ENCODE measurements at regions of chr5 and their contacts with region 1.

Region 1: DNA sequence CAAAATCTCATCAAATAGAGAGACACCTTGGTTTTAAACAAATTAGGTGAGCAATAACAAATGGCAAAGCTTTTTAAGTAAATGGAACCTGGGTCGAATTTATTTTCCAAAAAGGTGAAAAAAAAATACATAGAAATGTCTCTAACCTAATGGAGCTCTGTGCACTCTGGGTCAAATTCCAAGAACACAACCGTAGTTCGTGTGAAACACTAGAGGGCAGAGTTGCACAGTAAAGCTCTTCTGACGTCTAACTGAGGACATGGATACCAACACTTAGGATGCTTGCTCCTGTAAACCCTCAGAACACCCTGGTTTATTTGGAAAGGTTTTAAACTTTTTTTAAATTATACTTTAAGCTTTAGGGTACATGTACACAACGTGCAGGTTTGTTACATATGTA is 18.9 kb downstream of the MARCHF11 start:
- DNase-seq: no peak
- H3K4me3 ChIP-seq: no peak overlapping the region; a peak in 1 of 4 replicates
- H3K27ac ChIP-seq: peak overlapping the region in 1 of 2 experiments; percentile 82; a peak in 1 of 4 replicates
- H3K4me1 ChIP-seq: peaks cover 0 to 6% of the 10 kb centered on the region in 2 experiments; a peak in 2 of 4 replicates
- H3K27me3 ChIP-seq: no peaks in the 10 kb centered on the region
- CTCF ChIP-seq: peak; percentile 78
- EP300 ChIP-seq: no peak
- RAD21 ChIP-seq: peak; percentile 91

Region 2: GRCh38 chr5:16178745-16179372 is 18.2 kb after region 1 on chr5:
- CTCF ChIA-PET with region 1: interaction called, 37 read pairs
- POLR2A ChIA-PET with region 1: no interaction called
- DNase-seq: peak; percentile 73
- H3K4me3 ChIP-seq: peak overlapping the region; percentile 48 to 56; a peak in 3 of 4 replicates
- H3K27ac ChIP-seq: peak overlapping the region in 1 of 2 experiments; percentile 96; a peak in 2 of 4 replicates
- H3K4me1 ChIP-seq: peaks cover 0 to 22% of the 10 kb centered on the region in 2 experiments; a peak in 2 of 4 replicates
- H3K27me3 ChIP-seq: peaks cover 6% of the 10 kb centered on the region; the same call in 1 of the 2 replicates
- CTCF ChIP-seq: 0 out of 2 replicates have a peak, but pooled peaks have one; percentile 8
- EP300 ChIP-seq: no peak
- RAD21 ChIP-seq: peak; percentile 8; the same call in 1 of the 2 replicates

Region 3: GRCh38 chr5:16418471-16418922 is 257.8 kb after region 1 on chr5:
- CTCF ChIA-PET with region 1: interaction called, 14 read pairs
- POLR2A ChIA-PET with region 1: no interaction called
- DNase-seq: peak; percentile 77
- H3K4me3 ChIP-seq: no peak overlapping the region
- H3K27ac ChIP-seq: peak overlapping the region in 1 of 2 experiments; percentile 99; a peak in 2 of 4 replicates
- H3K4me1 ChIP-seq: peaks cover 0 to 14% of the 10 kb centered on the region in 2 experiments; a peak in 2 of 4 replicates
- H3K27me3 ChIP-seq: no peaks in the 10 kb centered on the region; the same call in 1 of the 2 replicates
- CTCF ChIP-seq: no peak
- EP300 ChIP-seq: peak; percentile 51 to 99; a peak in 3 of 4 replicates
- RAD21 ChIP-seq: peak; percentile 44

Region 4: DNA sequence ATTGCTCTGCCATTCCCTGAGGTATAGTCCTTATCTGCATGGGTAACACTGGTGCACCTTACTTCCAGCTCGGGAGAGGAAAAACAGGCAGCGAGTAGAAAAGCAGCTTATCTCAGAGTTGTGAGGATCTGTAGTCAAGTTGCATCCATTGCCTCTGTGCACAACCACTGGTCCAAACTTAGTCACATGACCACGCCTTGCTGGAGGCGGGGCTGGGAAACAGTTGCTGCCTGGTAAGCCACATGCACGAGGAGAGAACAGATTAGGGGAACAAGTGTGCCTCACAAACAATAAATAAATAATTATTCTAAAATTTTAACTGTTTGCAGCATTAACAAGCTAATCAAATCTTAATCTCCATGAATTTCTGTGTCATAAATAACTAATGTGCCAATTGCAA is 286.3 kb after region 1 on chr5:
- CTCF ChIA-PET with region 1: interaction called, 99 read pairs
- POLR2A ChIA-PET with region 1: no interaction called
- DNase-seq: no peak
- H3K4me3 ChIP-seq: no peak overlapping the region
- H3K27ac ChIP-seq: peak overlapping the region in 1 of 2 experiments; percentile 7; a peak in 1 of 4 replicates
- H3K4me1 ChIP-seq: peaks cover 0 to 2% of the 10 kb centered on the region in 2 experiments; a peak in 2 of 4 replicates
- H3K27me3 ChIP-seq: no peaks in the 10 kb centered on the region
- CTCF ChIP-seq: no peak
- EP300 ChIP-seq: no peak
- RAD21 ChIP-seq: no peak

Region 5: DNA sequence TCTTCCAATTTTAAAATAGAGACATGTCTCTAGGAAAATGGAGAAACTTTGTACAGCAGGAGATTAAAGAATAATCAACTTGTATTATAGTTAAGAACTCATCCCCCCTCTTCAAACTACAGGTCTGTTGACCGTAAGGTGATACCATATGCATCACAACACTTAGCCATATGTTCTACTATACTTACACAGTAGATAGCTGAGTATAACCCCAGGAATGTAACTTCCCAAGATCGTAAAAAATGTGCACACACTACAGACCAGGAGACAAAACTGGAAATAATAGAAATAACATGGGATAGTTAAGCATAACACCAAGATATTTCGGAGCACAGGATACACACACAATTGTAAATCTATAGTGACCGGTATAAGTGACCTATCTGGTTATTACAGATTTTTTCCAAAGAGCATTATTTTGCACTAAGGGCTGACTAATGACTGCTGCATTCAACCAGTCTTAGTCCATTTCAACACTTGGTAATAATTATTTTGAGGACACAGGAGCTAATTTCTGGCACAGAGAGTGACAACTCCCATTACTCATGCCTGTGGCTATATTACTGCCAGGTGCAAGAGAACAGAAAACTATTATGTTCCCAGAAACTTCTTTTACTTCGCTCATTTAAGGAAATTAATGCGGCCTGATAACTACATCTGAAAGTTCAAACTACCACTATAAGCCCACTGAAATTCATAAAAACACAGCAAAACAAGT is 320.3 kb after region 1 on chr5:
- CTCF ChIA-PET with region 1: no interaction called
- POLR2A ChIA-PET with region 1: no interaction called
- DNase-seq: no peak
- H3K4me3 ChIP-seq: no peak overlapping the region
- H3K27ac ChIP-seq: no peak overlapping the region; a peak in 1 of 4 replicates
- H3K4me1 ChIP-seq: no peaks in the 10 kb centered on the region; a peak in 1 of 4 replicates
- H3K27me3 ChIP-seq: no peaks in the 10 kb centered on the region
- CTCF ChIP-seq: no peak
- EP300 ChIP-seq: no peak
- RAD21 ChIP-seq: no peak